HEK293 (cell line): ENCODE measurements at regions of chr19 and their contacts with region 1.

Region 1: GRCh38 chr19:18985257-18985656 is 44.2 kb upstream of the HOMER3 start:
- H3K4me3 ChIP-seq: no peak overlapping the region
- H3K27ac ChIP-seq: no peak overlapping the region
- H3K4me1 ChIP-seq: no peaks in the 10 kb centered on the region
- CTCF ChIP-seq: no peak

Region 2: GRCh38 chr19:18865973-18866799 is 119.1 kb before region 1 on chr19:
- CTCF ChIA-PET with region 1: interaction called, 19 read pairs
- POLR2A ChIA-PET with region 1: no interaction called
- H3K4me3 ChIP-seq: no peak overlapping the region
- H3K27ac ChIP-seq: no peak overlapping the region; the same call in 1 of the 2 replicates
- H3K4me1 ChIP-seq: peaks cover 2% of the 10 kb centered on the region; the same call in 1 of the 2 replicates
- CTCF ChIP-seq: peak; percentile 59

Region 3: GRCh38 chr19:18895038-18895823 is 90.0 kb before region 1 on chr19:
- CTCF ChIA-PET with region 1: interaction called, 13 read pairs
- POLR2A ChIA-PET with region 1: interaction called, 5 read pairs
- H3K4me3 ChIP-seq: peak overlapping the region; percentile 50
- H3K27ac ChIP-seq: peak overlapping the region; percentile 69; the same call in 1 of the 2 replicates
- H3K4me1 ChIP-seq: no peaks in the 10 kb centered on the region; the same call in 1 of the 2 replicates
- CTCF ChIP-seq: peak; percentile 58

Region 4: DNA sequence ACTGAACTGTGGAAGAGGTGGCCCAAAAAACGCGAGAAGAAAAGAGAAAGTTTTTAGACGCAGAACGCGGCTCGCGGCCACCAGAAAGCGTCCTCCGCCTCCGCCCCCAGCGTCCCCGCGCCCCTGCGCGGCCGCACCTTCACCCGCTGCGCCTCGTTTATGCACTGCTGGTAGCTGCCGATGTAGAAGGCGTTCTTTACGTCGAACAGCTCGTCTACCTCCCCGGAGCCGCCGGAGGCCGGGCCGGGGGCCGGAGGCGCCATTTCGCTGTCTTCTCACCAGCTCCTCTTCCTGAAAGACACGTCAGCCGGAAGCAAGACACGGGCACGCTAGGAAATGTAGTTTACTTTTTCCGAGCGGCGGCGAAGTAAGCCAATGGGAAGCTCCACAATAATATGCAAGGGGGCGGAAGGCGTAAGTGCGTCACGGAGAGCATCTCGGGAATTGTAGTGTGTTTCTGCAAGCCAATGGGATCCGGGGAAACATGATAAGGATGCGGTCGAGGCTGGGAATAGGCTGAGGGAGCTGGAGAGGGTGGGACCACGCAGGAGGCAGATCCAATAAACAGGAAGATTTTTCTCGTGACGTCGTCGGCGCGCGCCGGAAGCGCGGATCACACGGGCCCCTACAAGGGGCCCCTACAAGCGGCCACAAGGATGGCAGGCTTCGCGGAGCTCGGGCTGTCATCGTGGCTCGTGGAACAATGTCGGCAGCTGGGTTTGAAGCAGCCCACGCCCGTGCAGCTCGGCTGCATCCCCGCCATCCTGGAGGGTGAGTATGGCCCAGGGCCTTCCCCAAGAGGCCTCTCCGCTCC is 66.0 kb before region 1 on chr19 and contains the starts of genes COPE and DDX49:
- CTCF ChIA-PET with region 1: interaction called, 14 read pairs
- POLR2A ChIA-PET with region 1: interaction called, 15 read pairs
- H3K4me3 ChIP-seq: peak within 1 kb of the TSS; percentile 94
- H3K27ac ChIP-seq: peak within 1 kb of the TSS; percentile 27; the same call in 1 of the 2 replicates
- H3K4me1 ChIP-seq: no peaks in the 10 kb centered on the region
- CTCF ChIP-seq: peak; percentile 21; the same call in 1 of the 2 replicates

Region 5: DNA sequence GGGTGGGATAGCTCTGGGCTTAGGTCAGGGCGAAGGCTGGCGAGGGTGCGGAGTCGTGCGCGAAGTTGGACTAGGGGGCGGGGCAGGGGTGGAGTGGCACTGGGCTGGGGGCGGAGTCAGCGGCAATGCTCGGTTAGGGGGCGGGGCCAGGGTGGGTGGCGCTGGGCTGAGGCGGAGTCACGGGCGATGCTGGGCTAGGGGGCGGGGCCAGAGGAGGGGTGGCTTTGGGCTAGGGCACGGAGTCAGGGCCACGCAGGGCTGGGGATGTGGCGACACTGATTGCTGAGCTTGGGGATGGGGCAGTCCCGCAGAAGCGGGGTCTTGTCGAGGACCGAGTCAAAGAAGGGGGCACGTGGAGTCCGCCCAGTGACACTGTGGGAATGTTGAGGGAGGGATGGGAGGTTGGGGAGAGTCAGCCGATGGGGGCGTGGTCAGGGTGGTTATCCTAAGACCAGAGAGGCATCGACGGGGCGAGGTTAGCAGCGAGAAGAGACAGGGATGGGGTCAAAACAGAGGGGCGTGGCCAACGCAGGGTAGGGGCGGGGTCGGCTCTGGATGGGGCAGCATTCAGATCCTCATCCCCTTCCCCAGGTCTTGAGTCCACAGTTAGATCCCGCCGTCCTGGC is 52.9 kb before region 1 on chr19:
- CTCF ChIA-PET with region 1: interaction called, 13 read pairs
- POLR2A ChIA-PET with region 1: interaction called, 11 read pairs
- H3K4me3 ChIP-seq: no peak overlapping the region
- H3K27ac ChIP-seq: no peak overlapping the region
- H3K4me1 ChIP-seq: no peaks in the 10 kb centered on the region
- CTCF ChIP-seq: no peak

Region 6: GRCh38 chr19:18940769-18941407 is 44.4 kb before region 1 on chr19 and contains the start of gene HOMER3:
- CTCF ChIA-PET with region 1: interaction called, 23 read pairs
- POLR2A ChIA-PET with region 1: no interaction called
- H3K4me3 ChIP-seq: peak within 1 kb of the TSS; percentile 62
- H3K27ac ChIP-seq: peak within 1 kb of the TSS; percentile 53; the same call in 1 of the 2 replicates
- H3K4me1 ChIP-seq: peaks cover 2% of the 10 kb centered on the region; the same call in 1 of the 2 replicates
- CTCF ChIP-seq: no peak

Region 7: DNA sequence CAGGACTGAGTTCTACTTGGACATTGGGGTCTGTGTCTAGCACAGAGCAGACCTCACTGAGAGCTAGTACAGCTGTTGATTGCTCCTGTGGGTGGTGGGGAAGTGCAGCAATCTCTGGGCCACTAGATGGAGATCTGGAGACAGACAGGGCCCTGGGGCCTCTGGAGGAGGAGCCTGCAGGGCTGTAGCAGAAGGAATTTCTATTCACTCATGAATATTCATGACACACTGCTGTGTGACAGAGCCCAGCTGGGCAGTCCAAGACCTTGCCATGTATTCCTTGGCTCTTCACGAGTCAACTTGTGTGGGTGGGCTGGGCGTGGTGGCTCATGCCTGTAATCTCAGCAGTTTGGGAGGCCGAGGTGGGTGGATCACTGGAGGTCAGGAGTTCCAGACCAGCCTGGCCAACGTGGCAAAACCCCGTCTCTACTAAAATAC is 10.6 kb after region 1 on chr19:
- CTCF ChIA-PET with region 1: interaction called, 24 read pairs
- POLR2A ChIA-PET with region 1: no interaction called
- H3K4me3 ChIP-seq: no peak overlapping the region
- H3K27ac ChIP-seq: no peak overlapping the region
- H3K4me1 ChIP-seq: no peaks in the 10 kb centered on the region
- CTCF ChIP-seq: 0 out of 2 replicates have a peak, but pooled peaks have one; percentile 19